ENCODE measurements at regions of chr5 and their contacts with region 1.

Region 1: DNA sequence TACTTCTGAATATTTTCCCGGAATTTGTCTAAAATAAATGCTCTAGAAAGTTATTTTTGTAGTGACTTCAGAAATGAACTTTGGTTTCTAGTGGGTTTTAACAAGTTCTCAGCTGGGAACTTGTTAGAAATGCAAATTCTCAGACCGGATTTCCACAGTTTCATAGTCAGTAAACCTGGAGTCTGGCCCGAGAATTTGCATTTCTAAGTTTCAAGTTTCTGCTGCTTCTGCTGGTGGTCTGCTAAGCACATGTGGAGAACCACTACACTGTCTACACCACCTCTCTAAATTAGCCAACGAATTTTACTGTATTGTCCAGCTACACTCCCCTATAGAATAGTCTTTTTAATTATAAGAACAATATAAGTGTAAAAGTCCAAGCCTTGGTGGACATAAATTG is 208.0 kb downstream of the CHSY3 start:
- DNase-seq: no peak
- H3K4me3 ChIP-seq: no peak overlapping the region
- H3K27ac ChIP-seq: no peak overlapping the region
- H3K4me1 ChIP-seq: no peaks in the 10 kb centered on the region
- H3K27me3 ChIP-seq: no peaks in the 10 kb centered on the region
- CTCF ChIP-seq: no peak
- POLR2A ChIP-seq: no peak

Region 2: GRCh38 chr5:131109540-131110255 is 997.5 kb after region 1 on chr5:
- intact Hi-C with region 1: loop called in 1 of 2 experiments (anchors 10 kb)
- DNase-seq: peak in 4 of 7 donors; percentile 19 to 52 (median 34)
- H3K4me3 ChIP-seq: no peak overlapping the region
- H3K27ac ChIP-seq: no peak overlapping the region
- H3K4me1 ChIP-seq: no peaks in the 10 kb centered on the region
- H3K27me3 ChIP-seq: no peaks in the 10 kb centered on the region
- CTCF ChIP-seq: peak; percentile 43 to 77 (median 74)
- POLR2A ChIP-seq: no peak